Esophagus squamous epithelium (tissue), 5 donors: ENCODE measurements at regions of chr1 and their contacts with region 1.

Region 1: GRCh38 chr1:19485362-19486187 is at the start of gene CAPZB:
- DNase-seq: peak; percentile 63
- H3K4me3 ChIP-seq: peak within 1 kb of the TSS; percentile 89 to 100 (median 96)
- H3K27ac ChIP-seq: peak within 1 kb of the TSS; percentile 99 to 100 (median 100)
- H3K4me1 ChIP-seq: peaks cover 27 to 70% (median 49%) of the 10 kb centered on the region in 3 donors
- H3K27me3 ChIP-seq: no peaks in the 10 kb centered on the region
- CTCF ChIP-seq: no peak
- POLR2A ChIP-seq: peak in 3 of 4 donors; percentile 56 to 94 (median 90)
- total RNA-seq, gene CAPZB: 89.4 to 146 (median 126) TPM

Region 2: DNA sequence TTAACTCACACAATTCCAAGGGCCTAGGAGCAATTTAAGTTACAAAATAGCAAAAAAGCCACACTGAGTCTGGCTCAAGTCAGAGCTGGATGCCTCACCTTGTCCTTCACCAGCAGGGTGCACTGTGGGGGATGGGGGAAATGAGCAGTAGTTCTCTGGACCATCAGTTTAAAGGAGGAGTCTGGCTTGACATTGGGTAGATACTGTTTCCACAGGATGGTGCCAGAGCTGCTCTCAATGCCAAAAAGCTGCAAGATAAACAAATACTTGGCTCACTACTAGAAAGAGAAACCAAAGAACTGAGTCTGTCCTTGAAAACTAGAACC is 253.1 kb before region 1 on chr1:
- intact Hi-C with region 1: no loop called
- DNase-seq: no peak
- H3K4me3 ChIP-seq: no peak overlapping the region
- H3K27ac ChIP-seq: peak overlapping the region in 3 of 4 donors; percentile 53 to 58 (median 55)
- H3K4me1 ChIP-seq: peaks cover 0 to 22% (median 0%) of the 10 kb centered on the region in 3 donors
- H3K27me3 ChIP-seq: no peaks in the 10 kb centered on the region
- CTCF ChIP-seq: no peak
- POLR2A ChIP-seq: no peak

Region 3: DNA sequence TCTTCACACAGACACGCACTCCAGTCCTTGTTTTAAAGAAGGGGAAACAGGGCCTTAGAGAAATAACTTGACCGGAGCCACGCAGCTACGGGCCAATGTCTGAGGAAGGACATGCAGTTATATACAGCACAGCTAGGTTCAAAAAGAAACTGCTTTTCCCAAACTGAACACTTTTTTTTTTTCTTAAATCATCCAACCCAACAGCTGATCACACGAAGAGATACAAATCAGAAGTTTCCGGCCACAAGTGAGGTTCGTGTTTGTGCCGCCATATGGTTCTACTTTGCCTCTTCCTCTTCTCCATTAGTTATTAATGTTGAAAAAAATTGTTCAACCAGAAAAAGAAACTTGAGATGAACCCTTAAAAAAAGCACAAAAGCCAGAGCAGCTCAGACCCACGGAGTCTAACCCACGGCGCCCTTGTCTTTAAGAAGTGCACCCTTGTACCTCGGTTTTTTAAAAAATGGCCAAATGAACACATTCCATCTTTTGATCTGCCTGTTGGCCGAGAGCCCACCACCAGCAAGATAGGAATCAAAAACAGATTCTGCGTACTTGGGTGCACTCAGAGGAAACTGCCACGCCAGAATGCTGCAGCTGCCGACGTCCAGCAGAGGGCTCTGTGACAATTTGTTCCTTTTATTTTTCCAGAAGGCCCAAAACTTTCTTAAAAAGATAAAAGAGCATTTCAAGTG is 94.5 kb before region 1 on chr1:
- intact Hi-C with region 1: loop called (anchors 10 kb)
- DNase-seq: no peak
- H3K4me3 ChIP-seq: peak overlapping the region in 2 of 4 donors; percentile 9 to 13
- H3K27ac ChIP-seq: peak overlapping the region; percentile 70 to 89 (median 86)
- H3K4me1 ChIP-seq: peaks cover 56 to 100% (median 69%) of the 10 kb centered on the region in 3 donors
- H3K27me3 ChIP-seq: no peaks in the 10 kb centered on the region
- CTCF ChIP-seq: peak; percentile 79 to 92 (median 85)
- POLR2A ChIP-seq: no peak

Region 4: GRCh38 chr1:19547814-19548213 is 62.2 kb after region 1 on chr1:
- intact Hi-C with region 1: no loop called
- DNase-seq: no peak
- H3K4me3 ChIP-seq: no peak overlapping the region
- H3K27ac ChIP-seq: no peak overlapping the region
- H3K4me1 ChIP-seq: no peaks in the 10 kb centered on the region
- H3K27me3 ChIP-seq: peaks cover 0 to 4% (median 0%) of the 10 kb centered on the region in 4 donors
- CTCF ChIP-seq: no peak
- POLR2A ChIP-seq: no peak

Region 5: DNA sequence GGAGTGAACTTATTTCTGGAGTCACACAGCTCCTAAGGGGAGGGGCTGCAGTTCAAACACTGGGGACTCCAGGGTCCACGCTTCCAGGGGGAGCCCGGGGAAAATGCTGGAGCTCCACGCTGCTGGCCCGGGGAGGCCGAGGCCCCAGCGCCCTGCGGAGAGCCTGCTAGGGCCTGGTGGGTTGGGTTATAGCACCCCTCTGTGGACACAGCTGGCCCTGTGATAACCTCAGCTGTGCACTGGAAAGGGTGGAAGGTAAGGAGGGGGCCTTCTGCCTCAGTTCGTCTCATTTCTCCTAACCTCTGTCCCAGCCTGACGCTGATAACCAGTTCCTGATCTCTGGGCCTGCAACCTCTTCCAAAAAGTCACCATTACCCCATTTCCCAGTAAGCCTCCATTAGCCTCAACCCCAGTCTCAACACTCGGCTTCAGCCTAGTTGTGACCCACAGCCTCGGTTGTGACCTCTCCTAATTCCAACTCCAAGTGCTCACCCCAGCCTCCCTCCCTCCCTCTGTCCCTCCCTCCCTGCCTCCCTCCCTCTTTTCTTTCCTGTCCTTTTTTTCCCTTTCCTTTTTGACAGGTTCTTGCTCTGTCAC is 165.7 kb after region 1 on chr1:
- intact Hi-C with region 1: loop called (anchors 10 kb)
- DNase-seq: no peak
- H3K4me3 ChIP-seq: peak overlapping the region in 2 of 4 donors; percentile 17 to 48
- H3K27ac ChIP-seq: peak overlapping the region; percentile 73 to 99 (median 91)
- H3K4me1 ChIP-seq: peaks cover 42 to 99% (median 86%) of the 10 kb centered on the region in 3 donors
- H3K27me3 ChIP-seq: no peaks in the 10 kb centered on the region
- CTCF ChIP-seq: peak in 5 of 6 experiments; percentile 42 to 61 (median 54)
- POLR2A ChIP-seq: no peak